ENCODE measurements at regions of chr21 and their contacts with region 1.

Region 1: DNA sequence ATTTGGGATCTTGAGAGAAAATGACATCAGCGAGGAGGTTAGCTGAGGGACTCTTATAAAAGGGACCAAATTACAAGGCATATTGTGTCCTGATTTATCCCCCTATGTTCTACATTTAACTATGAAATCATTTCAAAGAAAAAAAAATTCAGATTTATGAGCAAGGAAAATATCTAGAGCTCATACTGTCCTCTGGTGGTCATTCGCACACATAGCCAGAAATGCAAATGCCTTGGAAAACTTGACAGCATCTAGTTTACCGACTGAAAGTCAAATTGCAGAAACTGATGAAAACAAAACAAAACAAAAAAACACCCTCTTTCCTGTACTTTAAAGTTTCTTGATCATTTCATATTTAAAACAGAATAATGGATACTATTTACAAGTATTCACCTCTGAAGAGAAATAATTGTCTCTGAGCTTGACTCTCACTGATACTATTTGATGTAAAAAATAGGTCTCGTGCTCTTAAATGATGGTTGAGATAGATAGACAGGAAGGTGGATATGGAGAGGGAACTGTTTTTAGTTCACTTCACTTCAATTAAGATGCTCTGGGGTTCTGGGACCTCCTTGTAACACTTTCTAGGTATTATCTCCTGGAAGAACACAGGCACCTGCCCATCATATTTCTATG is 253.8 kb downstream of the PCP4 start:
- ATAC-seq: peak in 2 of 8 experiments; percentile 21 to 26
- H3K4me3 ChIP-seq: no peak overlapping the region
- H3K27ac ChIP-seq: no peak overlapping the region
- H3K4me1 ChIP-seq: peaks cover 0 to 2% of the 10 kb centered on the region in 2 donors

Region 2: DNA sequence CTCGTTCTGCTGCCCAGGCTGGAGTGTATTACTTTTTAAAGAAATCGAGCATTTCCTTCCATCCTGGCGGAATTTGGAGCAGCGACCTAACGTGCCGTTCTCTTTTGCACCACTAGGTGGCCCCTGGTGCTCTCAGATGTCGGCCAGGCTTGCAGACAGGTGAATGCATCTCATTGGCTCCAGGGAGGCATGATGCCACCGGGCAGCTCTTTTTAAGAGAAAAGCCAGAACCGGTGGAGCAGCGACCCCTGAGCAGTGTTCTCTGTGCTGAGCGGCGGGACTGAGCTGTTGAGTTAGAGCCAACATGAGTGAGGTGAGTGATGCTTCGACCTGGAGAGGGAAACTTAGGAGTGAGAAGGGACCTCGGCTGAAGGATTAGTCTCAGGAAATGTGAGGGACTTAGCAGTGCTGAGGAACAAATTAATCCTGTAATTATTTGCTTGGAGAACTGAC is 253.8 kb before region 1 on chr21 and contains the start of gene PCP4:
- in situ Hi-C with region 1: loop called in 4 of 9 experiments (anchors 25 kb)
- ATAC-seq: peak in 7 of 8 experiments; percentile 27 to 89 (median 82)
- H3K4me3 ChIP-seq: peak within 1 kb of the TSS in 2 of 5 donors; percentile 5 to 7
- H3K27ac ChIP-seq: no peak within 1 kb of the TSS
- H3K4me1 ChIP-seq: no peaks in the 10 kb centered on the region
- total RNA-seq, gene PCP4: 3.3 to 36.4 (median 18.7) TPM in 5 of 8 experiments, not detected in the others